Activated CD4-positive, alpha-beta memory T cell treated with anti-CD3 and anti-CD28 coated beads for 36 hours (primary cell): ENCODE measurements at regions of chr1 and their contacts with region 1.

Region 1: DNA sequence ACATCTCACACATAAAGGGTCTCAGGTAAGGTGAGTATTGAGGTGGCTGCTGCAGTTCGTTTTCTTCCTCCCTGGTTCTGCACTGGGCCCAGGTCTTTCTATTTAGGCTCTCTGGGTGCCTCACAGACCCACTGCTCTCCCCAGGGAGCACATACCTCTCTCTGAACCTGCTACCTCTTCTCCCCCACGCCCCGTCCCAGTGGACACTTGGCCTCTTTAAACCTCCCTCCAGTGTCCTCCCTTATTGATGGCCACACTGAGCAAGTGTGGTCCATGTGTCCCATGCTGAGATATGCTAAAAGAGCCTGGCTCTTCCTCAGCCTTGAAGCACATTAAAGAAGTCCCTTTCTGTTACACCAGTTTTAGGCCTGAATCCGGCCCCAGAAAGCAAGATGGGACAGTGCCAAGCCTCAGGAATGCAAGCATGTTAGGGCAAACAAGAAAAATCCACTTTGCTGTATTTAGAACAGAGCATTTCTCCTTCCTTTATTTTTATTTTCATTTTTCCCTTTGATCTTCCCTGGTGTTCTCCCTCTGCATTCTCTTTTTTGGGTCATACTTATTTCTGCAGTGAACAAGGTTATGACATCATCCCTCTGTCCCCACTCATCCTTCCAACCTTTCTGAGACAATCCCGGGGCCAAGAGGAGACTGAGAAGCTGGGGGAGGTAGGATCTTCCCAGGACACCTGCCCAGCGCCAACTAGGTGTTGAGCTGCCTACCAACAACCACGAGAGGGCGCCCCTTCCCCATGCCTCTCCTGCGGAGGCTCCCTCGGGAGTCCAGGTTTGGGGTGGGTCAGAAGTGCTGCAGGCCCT is 5.0 kb upstream of the CHI3L2 start:
- DNase-seq: peak; percentile 89
- H3K4me3 Mint-ChIP-seq: peak overlapping the region; percentile 61
- H3K27ac Mint-ChIP-seq: peak overlapping the region; percentile 95
- H3K4me1 Mint-ChIP-seq: peaks cover 91% of the 10 kb centered on the region
- H3K27me3 Mint-ChIP-seq: no peaks in the 10 kb centered on the region

Region 2: GRCh38 chr1:110403805-110404204 is 818.7 kb before region 1 on chr1:
- CTCF ChIA-PET with region 1: no interaction called
- POLR2A ChIA-PET with region 1: no interaction called
- intact Hi-C with region 1: no loop called
- DNase-seq: no peak
- H3K4me3 Mint-ChIP-seq: no peak overlapping the region
- H3K27ac Mint-ChIP-seq: no peak overlapping the region
- H3K4me1 Mint-ChIP-seq: peaks cover 17% of the 10 kb centered on the region
- H3K27me3 Mint-ChIP-seq: no peaks in the 10 kb centered on the region

Region 3: DNA sequence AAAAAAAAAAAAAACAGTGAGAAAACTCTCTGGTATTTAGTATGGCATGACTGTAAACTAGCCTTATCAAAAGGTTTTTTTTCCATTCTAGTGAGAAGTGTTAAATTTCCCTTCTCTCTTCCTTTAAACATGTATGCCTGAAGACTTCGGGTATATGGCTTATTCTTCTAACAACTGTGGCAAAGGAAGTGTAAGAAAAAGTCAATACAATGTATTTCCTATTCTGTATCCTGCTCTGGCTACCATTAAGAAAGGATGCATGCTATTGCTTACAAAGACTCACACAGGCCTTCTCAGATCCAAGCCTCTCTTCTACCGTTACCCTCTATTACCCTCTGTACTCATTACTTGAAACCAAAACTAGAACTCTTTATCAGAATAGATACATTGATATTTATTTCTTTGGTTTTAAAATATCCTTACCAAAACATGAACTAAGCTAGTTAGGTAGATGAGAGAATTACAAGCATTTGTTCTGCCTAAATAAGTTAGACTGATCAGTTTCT is 74.1 kb before region 1 on chr1:
- CTCF ChIA-PET with region 1: interaction called, 4 read pairs
- POLR2A ChIA-PET with region 1: interaction called, 3 read pairs
- intact Hi-C with region 1: loop called (anchors 2 kb)
- DNase-seq: no peak
- H3K4me3 Mint-ChIP-seq: no peak overlapping the region
- H3K27ac Mint-ChIP-seq: no peak overlapping the region
- H3K4me1 Mint-ChIP-seq: peaks cover 74% of the 10 kb centered on the region
- H3K27me3 Mint-ChIP-seq: no peaks in the 10 kb centered on the region

Region 4: GRCh38 chr1:111197598-111198284 is 24.8 kb before region 1 on chr1:
- CTCF ChIA-PET with region 1: interaction called, 143 read pairs
- POLR2A ChIA-PET with region 1: interaction called, 256 read pairs
- intact Hi-C with region 1: loop called (anchors 1 kb)
- DNase-seq: peak; percentile 68
- H3K4me3 Mint-ChIP-seq: peak overlapping the region; percentile 92
- H3K27ac Mint-ChIP-seq: peak overlapping the region; percentile 97
- H3K4me1 Mint-ChIP-seq: peaks cover 72% of the 10 kb centered on the region
- H3K27me3 Mint-ChIP-seq: no peaks in the 10 kb centered on the region

Region 5: DNA sequence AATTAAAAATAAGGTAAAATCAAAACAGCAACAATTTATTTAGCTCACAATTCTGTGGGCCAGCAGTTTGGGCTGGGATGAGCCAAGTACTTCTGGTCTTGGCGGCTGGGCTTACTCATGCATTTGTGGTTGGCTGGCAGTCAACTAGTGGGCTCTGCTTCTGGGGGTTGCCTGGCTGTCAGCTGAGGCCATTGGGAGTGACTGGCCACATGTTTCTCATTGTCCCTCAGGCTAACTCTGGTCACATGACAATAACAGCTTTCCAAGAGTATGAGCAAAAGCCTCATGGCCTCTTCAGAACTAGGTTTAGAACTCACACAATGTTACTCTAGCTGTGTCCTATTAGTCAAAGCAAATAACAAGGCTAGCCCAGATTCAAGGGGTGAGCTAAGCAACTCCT is 52.6 kb after region 1 on chr1:
- CTCF ChIA-PET with region 1: interaction called, 11 read pairs
- POLR2A ChIA-PET with region 1: interaction called, 3 read pairs
- intact Hi-C with region 1: no loop called
- DNase-seq: peak; percentile 69
- H3K4me3 Mint-ChIP-seq: no peak overlapping the region
- H3K27ac Mint-ChIP-seq: peak overlapping the region; percentile 79
- H3K4me1 Mint-ChIP-seq: peaks cover 36% of the 10 kb centered on the region
- H3K27me3 Mint-ChIP-seq: peaks cover 21% of the 10 kb centered on the region

Region 6: DNA sequence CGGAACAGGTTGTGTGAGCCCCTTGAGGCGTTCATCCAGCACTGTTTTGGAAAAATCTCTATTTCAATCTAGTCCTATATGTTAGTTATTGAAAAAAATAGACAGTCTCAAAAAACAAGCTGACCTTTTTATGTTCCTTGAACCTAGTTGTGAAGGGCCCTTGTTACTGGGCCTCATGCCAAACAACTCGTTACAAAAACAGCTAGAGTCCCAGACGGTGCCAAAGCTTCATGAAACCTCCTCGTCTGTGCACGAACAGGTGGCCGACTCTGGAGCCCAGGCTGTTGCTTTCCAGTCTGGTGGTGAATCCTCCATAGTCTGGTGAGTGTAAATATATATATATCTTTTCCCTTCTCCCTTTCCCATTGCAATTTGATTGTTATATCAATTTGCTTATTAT is 68.1 kb after region 1 on chr1 and contains the start of gene CHIA:
- CTCF ChIA-PET with region 1: no interaction called
- POLR2A ChIA-PET with region 1: no interaction called
- intact Hi-C with region 1: no loop called
- DNase-seq: no peak
- H3K4me3 Mint-ChIP-seq: no peak within 1 kb of the TSS
- H3K27ac Mint-ChIP-seq: no peak within 1 kb of the TSS
- H3K4me1 Mint-ChIP-seq: no peaks in the 10 kb centered on the region
- H3K27me3 Mint-ChIP-seq: no peaks in the 10 kb centered on the region
- total RNA-seq, gene CHIA: not detected

Region 7: GRCh38 chr1:111619635-111620440 is 397.3 kb after region 1 on chr1 and contains the start of gene RAP1A:
- CTCF ChIA-PET with region 1: interaction called, 4 read pairs
- POLR2A ChIA-PET with region 1: no interaction called
- intact Hi-C with region 1: loop called (anchors 5 kb)
- DNase-seq: peak; percentile 97
- H3K4me3 Mint-ChIP-seq: peak within 1 kb of the TSS; percentile 95
- H3K27ac Mint-ChIP-seq: peak within 1 kb of the TSS; percentile 97
- H3K4me1 Mint-ChIP-seq: peaks cover 65% of the 10 kb centered on the region
- H3K27me3 Mint-ChIP-seq: no peaks in the 10 kb centered on the region
- total RNA-seq, gene RAP1A: 292 to 294 TPM